HepG2 (cell line): ENCODE measurements at regions of chr2 and their contacts with region 1.

Region 1: DNA sequence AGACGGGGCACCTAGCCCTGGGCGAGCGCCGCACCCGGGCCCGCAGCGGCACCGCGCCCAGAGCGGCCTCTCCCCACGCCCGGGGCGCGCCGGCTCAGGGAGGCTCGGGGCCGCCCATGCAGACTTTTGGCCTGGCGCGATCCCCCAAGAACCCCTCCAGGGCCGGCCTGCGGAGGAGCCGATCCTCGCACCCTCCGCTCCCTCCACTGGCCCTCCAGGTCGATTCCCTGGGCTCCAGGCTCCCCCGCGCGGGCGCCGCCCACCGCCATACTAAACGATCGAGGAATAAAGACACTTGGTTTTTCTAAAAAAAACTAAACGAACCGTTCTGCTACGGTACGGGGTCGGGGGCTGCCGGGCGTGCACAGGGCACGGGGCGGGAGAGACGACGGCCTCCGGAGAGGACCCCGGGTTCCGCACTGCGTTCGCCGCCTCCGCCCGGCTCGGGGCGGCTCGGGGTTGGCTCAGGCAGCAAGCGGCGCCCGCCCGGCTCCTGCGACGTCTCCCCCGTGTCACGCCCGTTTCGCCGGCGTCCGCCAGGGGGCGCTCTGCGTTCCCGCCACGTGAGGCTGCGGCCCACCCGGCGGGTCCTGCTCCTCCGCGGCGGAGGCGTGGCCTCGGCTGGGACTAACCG is 365 bp upstream of the KHK start:
- DNase-seq: peak; percentile 87
- ATAC-seq: peak; percentile 83
- H3K4me3 ChIP-seq: peak overlapping the region; percentile 51 to 99 (median 74)
- H3K27ac ChIP-seq: peak overlapping the region; percentile 65
- H3K4me1 ChIP-seq: peaks cover 74% of the 10 kb centered on the region
- H3K27me3 ChIP-seq: no peaks in the 10 kb centered on the region
- CTCF ChIP-seq: peak; percentile 87
- EP300 ChIP-seq: peak in 1 of 2 experiments; percentile 18; a peak in 1 of 4 replicates
- POLR2A ChIP-seq: no peak
- RAD21 ChIP-seq: peak; percentile 94

Region 2: DNA sequence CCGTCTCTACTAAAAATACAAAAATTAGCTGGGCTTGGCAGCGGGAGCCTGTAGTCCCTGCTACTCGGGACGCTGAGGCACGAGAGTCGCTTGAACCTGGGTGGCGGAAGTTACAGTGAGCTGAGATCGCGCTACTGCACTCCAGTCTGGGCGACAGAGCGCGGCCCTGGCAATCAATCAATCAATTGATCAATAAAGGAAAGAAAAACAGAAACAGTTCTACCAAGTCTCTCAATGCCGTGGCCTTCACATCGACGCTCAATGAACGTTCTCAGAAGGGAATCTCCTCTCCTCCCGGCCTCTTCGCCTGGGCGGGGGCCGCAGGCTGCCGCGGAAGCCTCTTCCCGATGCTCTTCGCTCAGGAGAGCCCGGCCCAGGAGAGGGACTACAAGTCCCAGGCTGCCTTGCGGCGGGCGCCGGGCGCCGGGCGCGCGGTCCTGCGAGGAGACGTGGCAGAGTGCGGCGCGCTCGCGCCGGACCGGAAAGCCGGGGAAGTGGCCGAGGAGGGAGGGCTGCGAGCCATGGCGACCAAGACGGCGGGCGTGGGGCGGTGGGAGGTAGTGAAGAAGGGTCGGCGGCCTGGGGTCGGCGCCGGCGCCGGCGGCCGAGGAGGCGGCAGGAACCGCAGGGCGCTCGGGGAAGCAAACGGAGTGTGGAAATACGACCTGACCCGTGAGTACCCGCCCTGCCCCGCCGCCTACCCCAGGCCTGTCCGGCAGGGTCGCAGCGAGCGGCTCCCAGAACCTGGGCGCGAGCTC is 53.5 kb before region 1 on chr2 and contains the start of gene TMEM214:
- CTCF ChIA-PET with region 1: no interaction called
- POLR2A ChIA-PET with region 1: interaction called, 4 read pairs
- in situ Hi-C with region 1: no loop called
- intact Hi-C with region 1: loop called (anchors 10 kb)
- DNase-seq: peak; percentile 85
- ATAC-seq: peak; percentile 97
- H3K4me3 ChIP-seq: peak within 1 kb of the TSS; percentile 82 to 97 (median 97)
- H3K27ac ChIP-seq: peak within 1 kb of the TSS; percentile 72
- H3K4me1 ChIP-seq: peaks cover 59% of the 10 kb centered on the region
- H3K27me3 ChIP-seq: no peaks in the 10 kb centered on the region; a peak in 1 of 5 replicates
- CTCF ChIP-seq: peak; percentile 6; the same call in 1 of the 2 replicates
- EP300 ChIP-seq: peak in 1 of 2 experiments; percentile 4; a peak in 1 of 4 replicates
- POLR2A ChIP-seq: peak; percentile 92 to 95
- RAD21 ChIP-seq: peak; percentile 52; the same call in 1 of the 2 replicates
- total RNA-seq, gene TMEM214: 28.0 and 58.3 TPM in 2 replicates

Region 3: DNA sequence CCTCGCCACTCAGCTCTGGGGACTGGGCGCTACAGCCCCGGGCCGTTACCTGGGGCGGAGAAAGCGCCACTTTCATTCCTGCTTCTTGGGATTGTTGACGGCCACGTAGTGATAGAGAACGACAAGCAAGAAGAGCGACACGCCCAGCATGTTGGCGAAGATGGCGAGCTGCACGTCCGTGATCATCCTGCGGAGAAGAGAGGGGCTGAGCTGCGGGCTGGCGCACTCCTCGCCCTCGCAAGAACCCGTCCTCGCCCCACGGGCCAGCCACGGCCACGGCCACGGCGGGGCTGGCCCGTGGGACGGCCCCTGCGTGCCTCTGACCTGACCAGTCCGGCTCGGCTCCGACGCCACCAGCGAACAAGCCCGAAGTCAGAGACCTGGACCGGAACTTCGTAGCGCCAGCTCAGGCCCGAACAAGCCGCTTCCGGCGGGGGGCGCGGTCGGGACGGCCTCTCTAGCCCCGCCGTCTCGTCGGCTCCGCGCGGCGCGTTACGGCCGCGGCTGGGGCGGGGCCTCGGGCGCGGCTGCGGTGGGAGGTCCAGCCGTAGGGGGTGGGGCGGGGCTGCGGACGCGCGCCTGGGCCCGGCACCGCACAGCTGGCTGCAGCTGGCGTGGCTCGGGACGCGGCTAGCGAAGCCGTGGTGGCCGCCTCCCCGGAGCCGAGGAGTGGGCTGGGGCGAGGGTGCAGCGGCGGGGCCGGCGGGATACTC is 14.8 kb before region 1 on chr2 and contains the start of gene OST4:
- CTCF ChIA-PET with region 1: no interaction called
- POLR2A ChIA-PET with region 1: interaction called, 106 read pairs
- in situ Hi-C with region 1: no loop called
- intact Hi-C with region 1: no loop called
- DNase-seq: peak; percentile 88
- ATAC-seq: peak; percentile 88
- H3K4me3 ChIP-seq: peak within 1 kb of the TSS; percentile 92 to 99 (median 98)
- H3K27ac ChIP-seq: peak within 1 kb of the TSS; percentile 72
- H3K4me1 ChIP-seq: peaks cover 70% of the 10 kb centered on the region
- H3K27me3 ChIP-seq: peaks cover 0 to 16% of the 10 kb centered on the region in 2 experiments; a peak in 2 of 5 replicates
- CTCF ChIP-seq: peak; percentile 36
- EP300 ChIP-seq: peak in 1 of 2 experiments; percentile 45; a peak in 1 of 4 replicates
- POLR2A ChIP-seq: peak; percentile 93 to 97
- RAD21 ChIP-seq: peak; percentile 52
- total RNA-seq, gene OST4: 498 and 508 TPM in 2 replicates

Region 4: GRCh38 chr2:27133905-27134780 is 47.9 kb after region 1 on chr2 and contains the start of gene PREB:
- CTCF ChIA-PET with region 1: no interaction called
- POLR2A ChIA-PET with region 1: interaction called, 10 read pairs
- in situ Hi-C with region 1: no loop called
- intact Hi-C with region 1: no loop called
- DNase-seq: peak; percentile 91
- ATAC-seq: peak; percentile 83
- H3K4me3 ChIP-seq: peak within 1 kb of the TSS; percentile 92 to 100 (median 96)
- H3K27ac ChIP-seq: peak within 1 kb of the TSS; percentile 72
- H3K4me1 ChIP-seq: peaks cover 52% of the 10 kb centered on the region
- H3K27me3 ChIP-seq: peaks cover 6 to 14% of the 10 kb centered on the region in 2 experiments; a peak in 3 of 5 replicates
- CTCF ChIP-seq: peak; percentile 34
- EP300 ChIP-seq: 0 out of 4 replicates have a peak, but pooled peaks have one; percentile 7 to 26
- POLR2A ChIP-seq: peak; percentile 85 to 97
- RAD21 ChIP-seq: peak; percentile 55
- total RNA-seq, gene PREB: 112 and 119 TPM in 2 replicates

Region 5: DNA sequence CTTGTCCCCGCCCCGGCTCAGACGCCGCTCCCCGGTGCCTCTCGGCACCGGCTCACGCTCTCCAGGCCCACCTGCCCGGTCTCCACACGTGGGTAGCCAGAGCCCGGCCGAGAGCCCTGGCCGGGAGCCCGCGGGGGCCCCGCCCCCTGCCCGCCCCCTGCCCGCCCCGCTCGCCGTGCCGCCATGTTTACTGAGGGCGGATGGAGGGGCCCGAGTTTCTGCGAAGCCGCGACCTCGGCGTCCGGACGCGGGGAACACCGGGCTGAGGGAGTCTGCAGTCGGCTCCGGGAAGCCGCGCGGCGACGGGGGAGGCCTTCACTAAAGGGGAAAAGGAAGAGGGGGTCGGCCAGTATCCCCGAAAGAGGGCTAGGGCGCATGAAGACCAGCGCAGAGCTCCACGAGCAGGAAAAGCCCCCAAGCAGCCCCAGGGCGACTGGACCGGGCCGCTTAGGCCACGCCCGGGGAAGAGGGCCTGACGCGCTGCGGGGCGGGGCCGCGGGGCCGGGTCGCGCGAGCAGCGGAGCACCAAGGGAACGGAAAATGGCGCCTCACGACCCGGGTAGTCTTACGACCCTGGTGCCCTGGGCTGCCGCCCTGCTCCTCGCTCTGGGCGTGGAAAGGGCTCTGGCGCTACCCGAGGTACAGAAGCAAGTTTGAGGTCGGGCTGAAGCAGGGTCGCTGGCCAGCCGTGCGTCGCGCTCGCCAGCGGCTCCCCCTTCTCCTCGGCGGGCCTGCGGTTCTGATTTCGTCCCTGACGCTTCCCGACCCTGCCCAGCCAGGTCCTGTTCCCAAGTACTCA is 125.8 kb after region 1 on chr2 and contains the starts of genes ATRAID and SLC5A6:
- CTCF ChIA-PET with region 1: no interaction called
- POLR2A ChIA-PET with region 1: interaction called, 15 read pairs
- in situ Hi-C with region 1: no loop called
- intact Hi-C with region 1: no loop called
- DNase-seq: peak; percentile 82
- ATAC-seq: peak; percentile 91
- H3K4me3 ChIP-seq: peak within 1 kb of the TSS; percentile 87 to 93 (median 89)
- H3K27ac ChIP-seq: peak within 1 kb of the TSS; percentile 97
- H3K4me1 ChIP-seq: peaks cover 67% of the 10 kb centered on the region
- H3K27me3 ChIP-seq: no peaks in the 10 kb centered on the region; a peak in 1 of 5 replicates
- CTCF ChIP-seq: no peak; the same call in 1 of the 2 replicates
- EP300 ChIP-seq: peak in 1 of 2 experiments; percentile 11; a peak in 1 of 4 replicates
- POLR2A ChIP-seq: peak; percentile 95 to 98
- RAD21 ChIP-seq: peak; percentile 71
- total RNA-seq, gene ATRAID: 130 and 207 TPM in 2 replicates
- total RNA-seq, gene SLC5A6: 73.9 and 135 TPM in 2 replicates